Naive thymus-derived CD4-positive, alpha-beta T cell (primary cell): ENCODE measurements at regions of chr13 and their contacts with region 1.

Region 1: GRCh38 chr13:42333613-42334328 is 61.8 kb downstream of the AKAP11 start:
- DNase-seq: peak in 5 of 9 donors; percentile 16 to 39 (median 35)
- ATAC-seq: peak; percentile 65
- H3K4me3 ChIP-seq: no peak overlapping the region
- H3K4me3 Mint-ChIP-seq: no peak overlapping the region
- H3K27ac ChIP-seq: no peak overlapping the region
- H3K27ac Mint-ChIP-seq: peak overlapping the region in 1 of 9 donors; percentile 35
- H3K4me1 ChIP-seq: peaks cover 7 to 11% of the 10 kb centered on the region in 2 donors
- H3K4me1 Mint-ChIP-seq: peaks cover 17 to 38% (median 32%) of the 10 kb centered on the region in 7 donors
- H3K27me3 ChIP-seq: no peaks in the 10 kb centered on the region
- H3K27me3 Mint-ChIP-seq: no peaks in the 10 kb centered on the region

Region 2: DNA sequence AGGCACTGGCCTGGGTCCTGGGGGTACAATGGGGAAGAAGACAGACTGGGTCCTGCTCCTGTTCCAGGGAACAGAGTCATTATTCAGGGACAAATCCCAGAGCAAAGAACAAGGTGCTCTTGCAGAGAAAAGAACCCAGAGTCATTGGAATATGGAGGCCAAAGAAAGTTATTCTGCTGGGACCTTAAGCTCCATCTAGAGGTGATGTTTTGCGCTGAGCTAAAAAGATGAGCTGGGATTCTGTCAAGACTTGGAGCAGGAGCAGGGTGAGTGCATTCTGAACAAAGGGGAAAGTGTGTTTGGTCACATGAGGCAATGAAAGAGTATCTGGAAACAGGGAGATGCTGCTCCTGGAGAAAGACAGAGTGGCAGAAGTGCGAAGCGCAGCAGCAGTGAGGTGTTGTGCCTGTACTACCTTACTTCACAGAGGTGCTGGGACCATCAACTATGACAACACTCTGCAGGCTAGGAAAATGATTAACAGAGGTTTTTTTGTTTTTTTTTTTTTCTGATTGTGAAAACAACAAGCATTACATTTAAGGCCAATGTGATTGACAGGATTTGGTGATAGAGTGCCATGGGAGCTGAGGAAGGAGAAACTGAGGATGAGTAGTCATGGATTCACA is 144.9 kb after region 1 on chr13:
- CTCF ChIA-PET with region 1: interaction called, 6 read pairs
- POLR2A ChIA-PET with region 1: no interaction called
- intact Hi-C with region 1: loop called (anchors 1 kb)
- DNase-seq: peak in 2 of 9 donors; percentile 7 to 20
- ATAC-seq: peak; percentile 32
- H3K4me3 ChIP-seq: no peak overlapping the region
- H3K4me3 Mint-ChIP-seq: no peak overlapping the region
- H3K27ac ChIP-seq: no peak overlapping the region
- H3K27ac Mint-ChIP-seq: peak overlapping the region in 1 of 9 donors; percentile 26
- H3K4me1 ChIP-seq: no peaks in the 10 kb centered on the region
- H3K4me1 Mint-ChIP-seq: peaks cover 0 to 16% (median 4%) of the 10 kb centered on the region in 7 donors
- H3K27me3 ChIP-seq: no peaks in the 10 kb centered on the region
- H3K27me3 Mint-ChIP-seq: no peaks in the 10 kb centered on the region

Region 3: GRCh38 chr13:42497798-42498197 is 164.0 kb after region 1 on chr13:
- CTCF ChIA-PET with region 1: no interaction called
- POLR2A ChIA-PET with region 1: no interaction called
- intact Hi-C with region 1: loop called (anchors 1 to 5 kb)
- DNase-seq: no peak
- ATAC-seq: peak; percentile 65
- H3K4me3 ChIP-seq: no peak overlapping the region
- H3K4me3 Mint-ChIP-seq: no peak overlapping the region
- H3K27ac ChIP-seq: no peak overlapping the region
- H3K27ac Mint-ChIP-seq: no peak overlapping the region
- H3K4me1 ChIP-seq: peaks cover 0 to 6% of the 10 kb centered on the region in 2 donors
- H3K4me1 Mint-ChIP-seq: peaks cover 10 to 43% (median 20%) of the 10 kb centered on the region in 7 donors
- H3K27me3 ChIP-seq: no peaks in the 10 kb centered on the region
- H3K27me3 Mint-ChIP-seq: peaks cover 0 to under 1% (median 0%) of the 10 kb centered on the region in 5 donors

Region 4: DNA sequence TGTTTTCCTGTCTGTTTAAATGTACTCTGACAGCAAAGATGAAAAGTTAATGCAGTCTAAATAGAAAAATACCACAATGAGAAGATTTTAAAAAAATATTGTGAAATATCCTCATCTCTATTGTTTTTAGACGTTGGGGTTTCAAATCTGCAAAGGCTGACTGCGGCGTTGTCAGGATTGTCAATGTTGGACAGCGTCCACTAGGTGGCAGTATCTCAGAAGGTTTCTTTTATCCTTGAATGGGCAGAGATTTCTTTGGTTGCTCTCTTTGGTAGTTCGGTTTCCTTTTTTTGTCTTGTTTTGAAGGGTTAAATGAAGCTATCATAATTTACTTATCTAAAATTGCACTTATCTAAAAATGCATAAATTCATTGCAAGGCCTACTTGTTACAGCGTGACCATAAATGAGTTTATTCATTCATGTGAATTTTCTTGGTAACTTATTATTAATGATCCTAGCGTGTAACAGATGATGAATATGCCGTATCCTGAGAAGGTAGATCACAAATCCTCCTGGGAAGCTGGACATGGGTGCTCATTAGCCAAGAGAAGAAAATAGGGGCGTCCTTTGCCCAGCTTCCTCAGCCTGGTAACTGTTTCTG is 261.3 kb after region 1 on chr13:
- CTCF ChIA-PET with region 1: no interaction called
- POLR2A ChIA-PET with region 1: no interaction called
- intact Hi-C with region 1: loop called (anchors 1 kb)
- DNase-seq: peak in 6 of 9 donors; percentile 25 to 53 (median 40)
- ATAC-seq: peak; percentile 62
- H3K4me3 ChIP-seq: no peak overlapping the region
- H3K4me3 Mint-ChIP-seq: no peak overlapping the region
- H3K27ac ChIP-seq: no peak overlapping the region
- H3K27ac Mint-ChIP-seq: no peak overlapping the region
- H3K4me1 ChIP-seq: no peaks in the 10 kb centered on the region
- H3K4me1 Mint-ChIP-seq: peaks cover 0 to 5% (median 0%) of the 10 kb centered on the region in 7 donors
- H3K27me3 ChIP-seq: no peaks in the 10 kb centered on the region
- H3K27me3 Mint-ChIP-seq: peaks cover 0 to 11% (median 0%) of the 10 kb centered on the region in 5 donors